Activated CD8-positive, alpha-beta T cell treated with anti-CD3 and anti-CD28 coated beads for 36 hours (primary cell): ENCODE measurements at regions of chr7 and their contacts with region 1.

Region 1: DNA sequence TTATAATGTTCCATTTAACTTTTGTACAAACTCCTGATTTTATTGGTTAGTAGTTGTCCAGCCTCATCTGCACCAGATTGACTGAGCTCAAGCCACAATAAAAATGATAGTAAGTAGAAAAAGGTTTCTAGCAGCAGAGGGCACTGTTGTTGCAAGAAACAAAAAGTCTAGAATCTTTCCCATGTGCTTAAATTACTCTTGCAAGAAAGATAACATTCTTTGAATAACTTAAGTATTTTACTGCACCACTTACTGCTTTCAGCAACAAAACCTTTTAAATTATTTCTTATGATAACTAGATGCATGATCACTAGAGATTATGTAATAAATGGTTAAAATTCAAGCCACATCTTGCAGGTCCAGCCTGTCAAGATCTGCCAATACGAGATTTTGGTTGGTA is 27.0 kb downstream of the LMOD2 start:
- DNase-seq: peak; percentile 17
- ATAC-seq: peak; percentile 45
- H3K4me3 Mint-ChIP-seq: no peak overlapping the region
- H3K27ac Mint-ChIP-seq: no peak overlapping the region
- H3K4me1 Mint-ChIP-seq: no peaks in the 10 kb centered on the region
- H3K27me3 Mint-ChIP-seq: no peaks in the 10 kb centered on the region
- CTCF ChIP-seq: peak; percentile 66

Region 2: GRCh38 chr7:123608991-123609882 is 73.5 kb before region 1 on chr7:
- CTCF ChIA-PET with region 1: no interaction called
- POLR2A ChIA-PET with region 1: no interaction called
- intact Hi-C with region 1: no loop called
- DNase-seq: no peak
- ATAC-seq: no peak
- H3K4me3 Mint-ChIP-seq: no peak overlapping the region
- H3K27ac Mint-ChIP-seq: no peak overlapping the region
- H3K4me1 Mint-ChIP-seq: no peaks in the 10 kb centered on the region
- H3K27me3 Mint-ChIP-seq: peaks cover 11% of the 10 kb centered on the region
- CTCF ChIP-seq: no peak

Region 3: GRCh38 chr7:123655614-123656013 is 27.1 kb before region 1 on chr7 and contains the start of gene LMOD2:
- CTCF ChIA-PET with region 1: no interaction called
- POLR2A ChIA-PET with region 1: no interaction called
- intact Hi-C with region 1: no loop called
- DNase-seq: no peak
- ATAC-seq: no peak
- H3K4me3 Mint-ChIP-seq: no peak within 1 kb of the TSS
- H3K27ac Mint-ChIP-seq: no peak within 1 kb of the TSS
- H3K4me1 Mint-ChIP-seq: no peaks in the 10 kb centered on the region
- H3K27me3 Mint-ChIP-seq: peaks cover 9% of the 10 kb centered on the region
- CTCF ChIP-seq: no peak
- total RNA-seq, gene LMOD2: not detected

Region 4: GRCh38 chr7:123705211-123705901 is 22.7 kb after region 1 on chr7:
- CTCF ChIA-PET with region 1: interaction called, 16 read pairs
- POLR2A ChIA-PET with region 1: no interaction called
- intact Hi-C with region 1: no loop called
- DNase-seq: no peak
- ATAC-seq: no peak
- H3K4me3 Mint-ChIP-seq: no peak overlapping the region
- H3K27ac Mint-ChIP-seq: peak overlapping the region; percentile 4
- H3K4me1 Mint-ChIP-seq: peaks cover under 1% of the 10 kb centered on the region
- H3K27me3 Mint-ChIP-seq: no peaks in the 10 kb centered on the region
- CTCF ChIP-seq: no peak

Region 5: DNA sequence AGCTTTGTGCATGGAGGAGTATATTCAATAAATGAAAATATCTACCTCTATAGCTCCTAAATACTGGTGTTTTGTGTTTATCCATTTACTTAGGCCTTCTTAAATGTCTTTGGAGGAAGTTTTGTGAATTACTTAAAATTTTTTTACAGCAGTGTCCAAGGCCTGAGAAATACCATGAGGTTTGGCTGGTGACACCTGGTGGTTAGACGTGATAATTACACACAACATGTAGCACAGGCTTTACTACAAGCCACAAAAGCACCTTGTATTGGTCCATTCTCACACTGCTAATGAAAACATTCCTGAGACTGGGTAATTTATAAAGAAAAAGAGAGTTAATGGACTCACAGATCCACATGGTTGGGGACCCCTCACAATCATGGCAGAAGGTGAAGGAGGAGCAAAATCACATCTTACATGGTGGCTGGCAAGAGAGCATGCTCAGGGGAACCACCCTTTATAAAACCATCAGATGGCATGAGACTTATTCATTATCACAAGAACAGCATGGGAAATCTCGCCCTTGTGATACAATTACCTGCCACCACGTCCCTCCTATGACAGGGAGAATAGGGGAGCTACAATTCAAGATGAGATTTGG is 182.9 kb after region 1 on chr7:
- CTCF ChIA-PET with region 1: interaction called, 19 read pairs
- POLR2A ChIA-PET with region 1: no interaction called
- intact Hi-C with region 1: loop called (anchors 5 kb)
- DNase-seq: peak; percentile 65
- ATAC-seq: peak; percentile 96
- H3K4me3 Mint-ChIP-seq: no peak overlapping the region
- H3K27ac Mint-ChIP-seq: no peak overlapping the region
- H3K4me1 Mint-ChIP-seq: no peaks in the 10 kb centered on the region
- H3K27me3 Mint-ChIP-seq: peaks cover 13% of the 10 kb centered on the region
- CTCF ChIP-seq: peak; percentile 76

Region 6: GRCh38 chr7:123871998-123872867 is 189.5 kb after region 1 on chr7:
- CTCF ChIA-PET with region 1: interaction called, 14 read pairs
- POLR2A ChIA-PET with region 1: no interaction called
- intact Hi-C with region 1: loop called (anchors 5 kb)
- DNase-seq: peak; percentile 61
- ATAC-seq: peak; percentile 82
- H3K4me3 Mint-ChIP-seq: no peak overlapping the region
- H3K27ac Mint-ChIP-seq: no peak overlapping the region
- H3K4me1 Mint-ChIP-seq: no peaks in the 10 kb centered on the region
- H3K27me3 Mint-ChIP-seq: peaks cover 12% of the 10 kb centered on the region
- CTCF ChIP-seq: peak; percentile 66

Region 7: GRCh38 chr7:124032369-124033094 is 349.8 kb after region 1 on chr7 and contains the start of gene TMEM229A:
- CTCF ChIA-PET with region 1: no interaction called
- POLR2A ChIA-PET with region 1: no interaction called
- intact Hi-C with region 1: no loop called
- DNase-seq: peak; percentile 11
- ATAC-seq: peak; percentile 34
- H3K4me3 Mint-ChIP-seq: no peak within 1 kb of the TSS
- H3K27ac Mint-ChIP-seq: no peak within 1 kb of the TSS
- H3K4me1 Mint-ChIP-seq: peaks cover 5% of the 10 kb centered on the region
- H3K27me3 Mint-ChIP-seq: peaks cover 47% of the 10 kb centered on the region
- CTCF ChIP-seq: no peak
- total RNA-seq, gene TMEM229A: not detected